ENCODE measurements at regions of chr16 and their contacts with region 1.

Region 1: DNA sequence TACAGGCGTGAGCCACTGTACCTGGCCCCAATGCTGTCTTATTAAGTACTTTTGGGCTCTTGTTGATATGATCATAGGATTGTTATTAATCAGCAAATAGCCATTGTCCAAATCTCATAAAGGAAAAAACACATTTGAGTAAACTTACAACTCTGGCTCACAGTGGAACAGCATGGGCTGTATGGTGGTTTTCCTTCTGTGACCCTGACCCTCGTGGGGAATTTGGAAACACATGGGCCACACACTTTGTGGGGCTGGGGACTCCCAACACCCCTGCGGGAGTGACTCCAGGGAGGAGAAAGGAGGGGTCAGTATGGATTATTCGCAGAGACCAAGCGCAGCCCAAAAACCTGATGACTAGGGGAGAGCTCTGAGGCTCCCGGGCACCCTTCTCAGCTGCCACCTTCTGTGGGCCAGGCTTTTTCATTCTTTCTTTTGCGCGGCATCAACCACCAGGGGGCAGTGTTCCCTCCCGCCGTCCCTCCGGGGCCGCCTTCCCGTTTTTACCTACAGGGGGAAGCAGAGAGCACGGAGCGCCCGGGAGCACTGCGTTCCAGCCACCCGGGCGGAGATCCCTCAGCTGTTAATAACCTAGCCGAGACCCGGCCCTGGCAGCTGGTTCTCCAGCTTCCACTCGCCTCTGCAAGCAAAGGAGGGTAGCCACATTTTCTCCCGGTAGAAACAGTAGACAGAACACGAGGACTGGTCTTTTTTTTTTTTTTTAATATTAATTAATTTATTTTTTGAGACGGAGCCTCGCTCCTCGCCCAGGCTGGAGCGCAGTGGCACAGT is 9.7 kb downstream of the TSNAXIP1 start:
- DNase-seq: peak; percentile 90
- H3K4me3 ChIP-seq: no peak overlapping the region
- H3K27ac ChIP-seq: peak overlapping the region in 2 of 4 donors; percentile 21 to 35
- H3K4me1 ChIP-seq: peaks cover 0 to 15% (median 5%) of the 10 kb centered on the region in 4 donors
- H3K27me3 ChIP-seq: no peaks in the 10 kb centered on the region
- CTCF ChIP-seq: peak; percentile 99 to 100 (median 100)
- EP300 ChIP-seq: no peak
- POLR2A ChIP-seq: no peak

Region 2: DNA sequence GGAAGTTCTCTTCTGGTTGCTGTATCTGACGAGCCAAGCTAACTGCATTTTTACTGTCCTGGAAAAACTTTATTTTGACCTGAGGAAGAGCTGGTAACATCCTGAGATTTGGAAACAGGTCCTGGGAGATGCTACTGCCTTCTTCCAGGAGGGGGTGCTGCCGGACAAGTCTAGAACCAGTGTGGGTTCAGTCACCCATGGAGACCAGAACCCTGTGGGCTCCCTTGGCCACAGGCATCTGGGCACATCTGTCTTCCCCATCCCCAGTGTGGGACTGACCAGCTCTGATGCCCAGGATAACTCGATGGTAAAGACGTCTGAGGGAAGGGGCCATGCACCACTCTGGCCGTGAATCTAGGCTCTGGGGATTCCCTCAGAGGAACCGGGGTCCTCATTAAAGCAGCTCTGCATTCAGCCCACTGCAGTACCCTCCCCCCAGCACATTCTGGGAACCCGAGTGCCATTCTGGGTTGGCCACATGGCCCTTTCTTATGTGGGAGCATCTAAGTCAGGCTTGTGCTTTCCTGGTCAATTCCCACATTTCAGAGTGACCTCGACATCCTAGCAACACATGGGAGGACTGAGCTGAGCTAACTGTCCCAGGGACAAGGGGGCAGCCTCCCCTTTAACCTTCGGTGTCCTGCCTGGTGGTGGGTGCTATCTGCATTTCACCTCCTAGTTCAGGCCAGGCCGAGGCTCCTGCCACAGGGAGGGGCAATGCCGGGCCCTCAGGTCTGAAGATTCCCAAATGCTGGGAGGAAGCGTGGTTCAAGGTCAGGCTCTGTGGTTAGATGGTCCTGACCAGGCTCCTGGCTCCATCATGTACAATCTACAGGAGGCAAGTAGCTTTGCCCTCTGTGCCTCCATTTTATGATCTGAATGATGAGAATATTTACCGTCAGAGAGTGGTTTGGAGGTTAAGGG is 143.4 kb before region 1 on chr16:
- in situ Hi-C with region 1: loop called in 1 of 4 experiments (anchors 10 kb)
- intact Hi-C with region 1: no loop called
- DNase-seq: peak; percentile 79
- H3K4me3 ChIP-seq: no peak overlapping the region
- H3K27ac ChIP-seq: peak overlapping the region; percentile 73 to 84 (median 82)
- H3K4me1 ChIP-seq: peaks cover 27 to 53% (median 40%) of the 10 kb centered on the region in 4 donors
- H3K27me3 ChIP-seq: no peaks in the 10 kb centered on the region
- CTCF ChIP-seq: peak; percentile 64 to 84 (median 74)
- EP300 ChIP-seq: no peak
- POLR2A ChIP-seq: no peak

Region 3: GRCh38 chr16:67928561-67929364 is 112.3 kb after region 1 on chr16:
- in situ Hi-C with region 1: loop called in 2 of 4 experiments (anchors 10 kb)
- intact Hi-C with region 1: loop called (anchors 10 kb)
- DNase-seq: peak; percentile 75
- H3K4me3 ChIP-seq: no peak overlapping the region
- H3K27ac ChIP-seq: no peak overlapping the region
- H3K4me1 ChIP-seq: no peaks in the 10 kb centered on the region
- H3K27me3 ChIP-seq: no peaks in the 10 kb centered on the region
- CTCF ChIP-seq: peak; percentile 76 to 90 (median 85)
- EP300 ChIP-seq: no peak
- POLR2A ChIP-seq: no peak

Region 4: DNA sequence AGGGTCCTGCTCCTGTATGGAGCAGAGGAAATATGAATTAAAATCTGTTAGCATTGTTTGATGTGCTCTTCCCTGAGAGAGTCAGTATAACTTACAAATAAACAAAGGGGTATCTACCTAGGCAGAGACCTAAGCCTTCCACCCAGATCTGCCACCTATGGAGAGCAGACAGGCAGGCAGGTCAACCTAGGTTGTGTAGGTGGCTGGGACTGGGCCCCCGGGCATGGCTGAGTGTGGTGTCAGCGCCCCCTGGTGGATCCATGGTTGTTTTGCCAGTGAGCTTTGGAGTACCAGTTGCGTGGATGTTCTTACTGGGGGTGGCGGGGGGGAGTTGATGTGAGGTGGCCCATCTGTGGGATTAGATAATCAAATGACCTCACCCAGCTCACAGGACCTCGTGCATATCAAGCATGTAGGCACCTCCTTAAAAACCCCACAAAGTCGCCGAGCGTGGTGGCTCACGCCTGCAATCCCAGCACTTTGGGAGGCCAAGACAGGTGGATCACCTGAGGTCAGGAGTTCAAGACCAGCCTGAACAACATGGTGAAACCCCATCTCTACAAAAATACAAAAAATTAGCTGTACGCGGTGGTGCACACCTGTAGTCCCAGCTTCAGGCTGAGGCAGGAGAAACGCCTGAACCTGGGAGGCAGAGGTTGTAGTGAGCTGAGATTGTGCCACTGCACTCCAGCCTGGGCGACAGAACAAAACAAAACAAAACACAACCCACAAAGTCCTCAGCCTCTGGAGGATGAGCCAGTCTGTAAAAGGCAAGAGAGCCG is 224.3 kb after region 1 on chr16:
- in situ Hi-C with region 1: no loop called
- intact Hi-C with region 1: loop called (anchors 5 kb)
- DNase-seq: peak; percentile 89
- H3K4me3 ChIP-seq: no peak overlapping the region
- H3K27ac ChIP-seq: peak overlapping the region in 1 of 4 donors; percentile 18
- H3K4me1 ChIP-seq: no peaks in the 10 kb centered on the region
- H3K27me3 ChIP-seq: no peaks in the 10 kb centered on the region
- CTCF ChIP-seq: peak; percentile 83 to 90 (median 90)
- EP300 ChIP-seq: no peak
- POLR2A ChIP-seq: no peak

Region 5: DNA sequence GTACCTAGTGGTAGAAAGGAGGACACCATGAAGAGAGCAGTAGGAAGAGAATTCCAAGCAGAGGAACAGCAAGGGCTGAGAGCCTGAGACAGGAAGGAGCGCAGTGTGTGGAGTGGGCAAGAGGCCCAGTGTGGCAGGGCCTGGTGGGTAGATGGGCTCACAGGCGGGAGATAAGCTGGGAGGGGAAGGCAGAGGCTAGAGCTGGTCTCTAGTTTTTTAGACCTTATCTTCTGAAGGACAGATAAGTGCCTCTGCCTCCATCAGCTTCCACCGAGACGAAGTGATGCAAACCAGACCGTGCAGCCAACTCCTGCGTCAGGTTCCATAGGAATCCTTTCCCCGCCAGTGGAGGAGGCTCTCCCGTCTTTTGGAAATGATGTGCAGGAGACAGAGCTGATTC is 954.2 kb after region 1 on chr16:
- in situ Hi-C with region 1: no loop called
- intact Hi-C with region 1: no loop called
- DNase-seq: no peak
- H3K4me3 ChIP-seq: no peak overlapping the region
- H3K27ac ChIP-seq: no peak overlapping the region
- H3K4me1 ChIP-seq: no peaks in the 10 kb centered on the region
- H3K27me3 ChIP-seq: no peaks in the 10 kb centered on the region
- CTCF ChIP-seq: no peak
- EP300 ChIP-seq: no peak
- POLR2A ChIP-seq: no peak